ENCODE measurements at regions of chr11 and their contacts with region 1.

Region 1: GRCh38 chr11:2885676-2886081 is at the start of gene CDKN1C:
- DNase-seq: peak; percentile 77
- H3K4me3 Mint-ChIP-seq: peak within 1 kb of the TSS; percentile 88
- H3K27ac Mint-ChIP-seq: peak within 1 kb of the TSS; percentile 58
- H3K4me1 Mint-ChIP-seq: no peaks in the 10 kb centered on the region
- H3K27me3 Mint-ChIP-seq: peaks cover 21% of the 10 kb centered on the region
- total RNA-seq, gene CDKN1C: 3.1 and 3.9 TPM in 2 replicates

Region 2: DNA sequence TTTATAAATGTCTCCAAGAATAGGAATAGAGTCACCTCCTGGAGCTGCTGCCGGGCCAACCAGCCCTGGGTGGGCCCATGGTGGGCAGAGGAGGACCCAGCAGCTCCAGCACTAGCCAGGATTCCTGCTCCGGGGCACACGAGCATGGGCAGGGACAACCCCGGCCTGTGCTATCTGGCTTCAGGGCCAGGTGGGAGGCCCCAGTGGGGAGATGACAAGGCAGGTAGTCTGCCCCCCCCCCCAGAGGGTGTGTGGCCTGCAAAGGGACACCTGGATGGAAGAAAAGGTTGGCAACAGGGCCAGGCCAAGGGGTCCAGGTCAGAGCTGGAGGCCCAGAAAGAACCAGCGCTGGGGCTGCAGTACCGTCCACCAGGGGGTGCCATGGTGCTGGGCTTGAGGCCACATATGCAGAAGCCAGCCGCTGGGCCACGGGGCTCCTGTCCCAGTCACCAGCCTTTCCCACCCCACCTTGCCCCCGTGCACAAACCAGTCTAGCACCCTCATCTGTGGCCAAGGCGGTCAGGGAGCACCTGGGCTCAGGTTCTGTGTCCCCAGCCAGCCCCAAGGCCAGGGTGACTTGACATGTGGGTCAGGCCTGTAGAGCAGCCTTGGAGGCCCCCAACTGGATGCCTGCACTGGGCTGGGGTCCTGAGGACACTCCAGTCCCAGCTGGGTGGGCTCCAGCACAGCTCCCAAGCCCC is 580.4 kb before region 1 on chr11:
- intact Hi-C with region 1: loop called (anchors 2 kb)
- DNase-seq: peak; percentile 69
- H3K4me3 Mint-ChIP-seq: no peak overlapping the region
- H3K27ac Mint-ChIP-seq: peak overlapping the region; percentile 86
- H3K4me1 Mint-ChIP-seq: peaks cover 33% of the 10 kb centered on the region
- H3K27me3 Mint-ChIP-seq: no peaks in the 10 kb centered on the region

Region 3: DNA sequence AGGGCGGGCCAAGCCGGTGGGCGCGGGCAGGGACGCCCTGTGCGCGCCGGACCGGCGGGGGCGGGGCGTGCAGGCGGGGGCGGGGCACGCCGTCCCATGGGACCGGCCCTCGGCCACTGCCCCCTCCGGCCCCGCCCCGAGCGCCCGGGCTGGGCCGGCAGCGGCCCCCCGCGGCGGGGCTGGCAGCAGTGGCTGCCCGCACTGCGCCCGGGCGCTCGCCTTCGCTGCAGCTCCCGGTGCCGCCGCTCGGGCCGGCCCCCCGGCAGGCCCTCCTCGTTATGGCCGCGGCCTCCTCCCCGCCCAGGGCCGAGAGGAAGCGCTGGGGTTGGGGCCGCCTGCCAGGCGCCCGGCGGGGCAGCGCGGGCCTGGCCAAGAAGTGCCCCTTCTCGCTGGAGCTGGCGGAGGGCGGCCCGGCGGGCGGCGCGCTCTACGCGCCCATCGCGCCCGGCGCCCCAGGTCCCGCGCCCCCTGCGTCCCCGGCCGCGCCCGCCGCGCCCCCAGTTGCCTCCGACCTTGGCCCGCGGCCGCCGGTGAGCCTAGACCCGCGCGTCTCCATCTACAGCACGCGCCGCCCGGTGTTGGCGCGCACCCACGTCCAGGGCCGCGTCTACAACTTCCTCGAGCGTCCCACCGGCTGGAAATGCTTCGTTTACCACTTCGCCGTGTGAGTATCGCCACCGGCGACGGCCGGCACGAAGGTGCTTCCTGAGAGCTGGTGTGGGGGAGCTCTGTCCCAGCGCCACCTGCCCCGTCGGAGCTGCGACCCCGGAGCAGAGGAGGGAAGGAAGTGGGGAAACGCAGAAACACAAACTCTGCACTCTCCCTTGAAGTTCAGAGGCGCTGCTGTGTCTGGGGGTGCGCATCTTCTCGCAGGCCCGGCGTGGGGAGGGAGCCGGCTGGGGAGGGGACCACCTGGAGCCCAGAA is 440.6 kb before region 1 on chr11 and contains the start of gene KCNQ1:
- intact Hi-C with region 1: loop called (anchors 1 kb)
- DNase-seq: peak; percentile 49
- H3K4me3 Mint-ChIP-seq: peak within 1 kb of the TSS; percentile 88
- H3K27ac Mint-ChIP-seq: peak within 1 kb of the TSS; percentile 65
- H3K4me1 Mint-ChIP-seq: peaks cover 27% of the 10 kb centered on the region
- H3K27me3 Mint-ChIP-seq: peaks cover 14% of the 10 kb centered on the region
- total RNA-seq, gene KCNQ1: 5.3 and 6.4 TPM in 2 replicates

Region 4: DNA sequence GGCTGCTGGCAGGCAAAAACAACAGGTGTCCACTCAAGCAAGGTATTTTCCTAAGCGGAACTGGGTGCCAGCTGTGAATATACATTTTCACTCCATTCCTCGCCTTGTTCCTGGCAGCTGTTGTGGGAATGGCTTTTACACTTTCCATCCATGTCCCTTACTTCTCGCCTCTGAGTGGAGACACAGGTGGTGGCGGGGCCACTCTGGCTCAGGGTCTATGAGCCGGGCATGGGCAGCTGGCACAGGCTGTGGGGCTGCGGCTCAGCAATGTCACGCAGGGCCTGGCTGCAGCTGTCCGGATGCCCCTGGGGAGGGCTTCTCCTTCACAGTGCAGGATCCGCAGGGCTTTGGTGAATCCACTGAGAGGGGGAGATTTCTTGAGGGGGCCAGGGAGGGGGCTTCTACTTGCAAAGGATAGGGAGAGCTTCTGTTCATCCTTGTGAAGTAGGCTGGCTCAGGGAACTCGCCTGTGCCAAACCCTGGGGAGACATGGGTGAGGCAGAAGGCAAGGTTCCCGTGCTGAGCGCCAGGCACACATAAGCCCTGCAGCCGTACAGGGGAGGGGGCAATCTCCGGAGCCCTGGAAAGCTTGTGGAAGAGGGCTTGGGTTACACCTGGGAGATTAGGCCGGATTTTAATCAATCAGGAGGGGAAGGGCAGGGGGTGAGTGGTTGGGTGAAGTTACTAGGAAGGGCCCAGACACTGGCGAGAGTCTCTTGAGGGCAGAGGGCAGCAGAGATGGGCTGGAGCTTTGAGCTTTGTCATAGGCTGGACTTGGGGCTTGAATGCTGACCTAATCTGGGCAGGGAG is 231.5 kb before region 1 on chr11:
- intact Hi-C with region 1: no loop called
- DNase-seq: no peak
- H3K4me3 Mint-ChIP-seq: no peak overlapping the region
- H3K27ac Mint-ChIP-seq: no peak overlapping the region
- H3K4me1 Mint-ChIP-seq: no peaks in the 10 kb centered on the region
- H3K27me3 Mint-ChIP-seq: no peaks in the 10 kb centered on the region

Region 5: DNA sequence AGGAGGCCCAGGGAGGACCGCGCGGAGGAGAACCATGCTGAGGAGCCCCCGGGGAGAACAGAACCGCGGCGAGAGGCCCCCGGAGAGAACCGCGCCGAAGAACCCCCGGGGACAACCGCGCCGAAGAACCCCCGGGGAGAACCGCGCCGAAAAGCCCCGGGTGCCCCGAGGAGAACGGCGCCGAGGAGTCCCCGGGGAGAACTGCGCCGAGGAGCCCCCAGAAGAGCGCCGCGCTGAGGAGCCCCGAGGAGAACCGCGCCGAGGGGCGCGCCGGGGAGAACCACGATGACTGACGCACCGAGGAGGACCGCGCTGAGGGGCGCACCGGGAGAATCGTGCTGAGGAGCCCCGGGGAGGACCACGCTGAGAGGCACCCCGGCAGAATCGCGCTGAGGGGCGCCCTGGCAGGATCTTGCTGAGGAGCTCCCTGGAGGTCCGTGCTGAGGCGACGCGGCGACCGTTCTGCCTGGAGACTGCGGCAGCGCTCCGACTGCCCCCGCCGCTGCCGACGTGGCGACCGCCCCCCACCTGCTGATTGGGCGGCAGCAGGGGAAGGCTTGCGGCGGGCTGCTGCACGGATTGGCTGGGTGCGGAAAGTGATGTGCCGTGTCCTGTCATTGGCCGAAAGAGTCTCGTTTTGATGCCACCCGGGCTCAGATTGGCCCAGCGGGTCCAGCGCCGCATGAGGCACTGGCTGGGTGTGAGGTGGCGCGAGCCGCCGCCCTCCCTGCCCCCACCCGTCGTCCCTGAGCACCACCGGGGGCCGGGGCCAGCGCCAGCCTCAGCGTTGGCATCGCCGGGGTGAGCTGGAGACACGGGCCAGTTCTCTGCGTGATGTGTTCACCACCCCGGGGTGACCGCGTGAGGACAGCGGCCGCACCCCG is 185.9 kb before region 1 on chr11 and contains the start of gene KCNQ1OT1:
- intact Hi-C with region 1: loop called (anchors 1 kb)
- DNase-seq: peak; percentile 85
- H3K4me3 Mint-ChIP-seq: peak within 1 kb of the TSS; percentile 88
- H3K27ac Mint-ChIP-seq: peak within 1 kb of the TSS; percentile 74
- H3K4me1 Mint-ChIP-seq: peaks cover 11% of the 10 kb centered on the region
- H3K27me3 Mint-ChIP-seq: peaks cover 2% of the 10 kb centered on the region
- total RNA-seq, gene KCNQ1OT1: 0.66 and 0.67 TPM in 2 replicates

Region 6: DNA sequence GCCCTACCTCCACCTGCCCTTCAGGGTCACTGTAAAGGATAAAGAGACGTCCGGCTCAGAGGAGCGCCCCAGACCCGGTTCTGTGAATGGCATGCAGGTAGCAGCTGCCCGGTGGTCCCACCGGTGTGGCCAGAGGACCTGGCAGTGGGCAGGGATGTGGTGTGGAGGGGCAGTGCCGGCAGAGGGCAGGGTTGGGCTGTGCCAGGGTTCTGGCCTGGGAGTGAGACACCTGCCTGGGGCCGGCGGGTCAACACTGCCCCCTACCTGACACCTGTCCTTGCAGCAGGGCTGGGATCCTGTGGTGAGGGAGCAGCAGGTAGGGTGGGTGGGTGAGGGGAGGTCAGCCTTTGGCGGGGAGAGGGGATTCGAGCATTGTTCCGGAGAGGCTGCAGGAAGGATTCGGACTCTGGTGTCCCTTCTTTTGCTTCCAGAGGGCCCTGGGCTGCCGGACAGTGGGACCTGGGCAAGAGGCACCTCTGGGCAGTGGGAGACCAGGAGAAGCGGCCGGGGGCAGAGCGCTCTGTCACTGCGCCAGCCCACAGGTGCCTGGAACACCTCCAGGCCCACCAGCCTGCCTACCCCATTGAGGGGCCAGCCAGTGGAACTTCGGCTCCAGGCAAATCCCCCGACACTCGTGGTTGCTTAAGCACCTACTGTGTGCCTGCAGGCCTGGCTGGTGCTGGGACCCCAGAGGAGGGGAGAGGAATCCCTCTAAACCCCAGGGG is 45.2 kb after region 1 on chr11:
- intact Hi-C with region 1: loop called (anchors 1 kb)
- DNase-seq: no peak
- H3K4me3 Mint-ChIP-seq: peak overlapping the region; percentile 78
- H3K27ac Mint-ChIP-seq: peak overlapping the region; percentile 77
- H3K4me1 Mint-ChIP-seq: peaks cover 15% of the 10 kb centered on the region
- H3K27me3 Mint-ChIP-seq: peaks cover 12% of the 10 kb centered on the region

Region 7: GRCh38 chr11:3091791-3092602 is 206.3 kb after region 1 on chr11:
- intact Hi-C with region 1: loop called (anchors 5 kb)
- DNase-seq: peak; percentile 60
- H3K4me3 Mint-ChIP-seq: no peak overlapping the region
- H3K27ac Mint-ChIP-seq: no peak overlapping the region
- H3K4me1 Mint-ChIP-seq: no peaks in the 10 kb centered on the region
- H3K27me3 Mint-ChIP-seq: no peaks in the 10 kb centered on the region